ENCODE measurements at regions of chr2 and their contacts with region 1.

Region 1: GRCh38 chr2:206765242-206766056 is at the starts of genes FASTKD2 and MDH1B:
- DNase-seq: peak; percentile 86 to 88
- H3K4me3 ChIP-seq: peak within 1 kb of the TSS; percentile 66
- H3K4me3 Mint-ChIP-seq: peak within 1 kb of the TSS; percentile 82
- H3K27ac Mint-ChIP-seq: peak within 1 kb of the TSS; percentile 93
- H3K4me1 ChIP-seq: no peaks in the 10 kb centered on the region
- H3K4me1 Mint-ChIP-seq: peaks cover 8% of the 10 kb centered on the region
- H3K27me3 ChIP-seq: no peaks in the 10 kb centered on the region
- H3K27me3 Mint-ChIP-seq: peaks cover 3% of the 10 kb centered on the region
- CTCF ChIP-seq: no peak
- total RNA-seq, gene FASTKD2: 29.8 and 30.3 TPM in 2 replicates
- total RNA-seq, gene MDH1B: 0.34 and 0.39 TPM in 2 replicates

Region 2: GRCh38 chr2:206408323-206409320 is 356.8 kb before region 1 on chr2:
- CTCF ChIA-PET with region 1: no interaction called
- POLR2A ChIA-PET with region 1: no interaction called
- intact Hi-C with region 1: loop called (anchors 10 kb)
- DNase-seq: no peak
- H3K4me3 ChIP-seq: no peak overlapping the region
- H3K4me3 Mint-ChIP-seq: no peak overlapping the region
- H3K27ac Mint-ChIP-seq: no peak overlapping the region
- H3K4me1 ChIP-seq: no peaks in the 10 kb centered on the region; the same call in 1 of the 2 replicates
- H3K4me1 Mint-ChIP-seq: no peaks in the 10 kb centered on the region
- H3K27me3 ChIP-seq: no peaks in the 10 kb centered on the region
- H3K27me3 Mint-ChIP-seq: no peaks in the 10 kb centered on the region
- CTCF ChIP-seq: no peak

Region 3: GRCh38 chr2:206457188-206457634 is 308.2 kb before region 1 on chr2:
- CTCF ChIA-PET with region 1: no interaction called
- POLR2A ChIA-PET with region 1: interaction called, 11 read pairs
- intact Hi-C with region 1: no loop called
- DNase-seq: no peak
- H3K4me3 ChIP-seq: no peak overlapping the region
- H3K4me3 Mint-ChIP-seq: no peak overlapping the region
- H3K27ac Mint-ChIP-seq: peak overlapping the region; percentile 16
- H3K4me1 ChIP-seq: peaks cover 39% of the 10 kb centered on the region
- H3K4me1 Mint-ChIP-seq: peaks cover 25% of the 10 kb centered on the region
- H3K27me3 ChIP-seq: no peaks in the 10 kb centered on the region
- H3K27me3 Mint-ChIP-seq: no peaks in the 10 kb centered on the region
- CTCF ChIP-seq: no peak

Measured in Caco-2 (cell line).